HEK293T (cell line): ENCODE measurements at regions of chr1 and their contacts with region 1.

Region 1: GRCh38 chr1:151340870-151341754 is 5.9 kb downstream of the RFX5 start:
- DNase-seq: peak; percentile 77

Region 2: DNA sequence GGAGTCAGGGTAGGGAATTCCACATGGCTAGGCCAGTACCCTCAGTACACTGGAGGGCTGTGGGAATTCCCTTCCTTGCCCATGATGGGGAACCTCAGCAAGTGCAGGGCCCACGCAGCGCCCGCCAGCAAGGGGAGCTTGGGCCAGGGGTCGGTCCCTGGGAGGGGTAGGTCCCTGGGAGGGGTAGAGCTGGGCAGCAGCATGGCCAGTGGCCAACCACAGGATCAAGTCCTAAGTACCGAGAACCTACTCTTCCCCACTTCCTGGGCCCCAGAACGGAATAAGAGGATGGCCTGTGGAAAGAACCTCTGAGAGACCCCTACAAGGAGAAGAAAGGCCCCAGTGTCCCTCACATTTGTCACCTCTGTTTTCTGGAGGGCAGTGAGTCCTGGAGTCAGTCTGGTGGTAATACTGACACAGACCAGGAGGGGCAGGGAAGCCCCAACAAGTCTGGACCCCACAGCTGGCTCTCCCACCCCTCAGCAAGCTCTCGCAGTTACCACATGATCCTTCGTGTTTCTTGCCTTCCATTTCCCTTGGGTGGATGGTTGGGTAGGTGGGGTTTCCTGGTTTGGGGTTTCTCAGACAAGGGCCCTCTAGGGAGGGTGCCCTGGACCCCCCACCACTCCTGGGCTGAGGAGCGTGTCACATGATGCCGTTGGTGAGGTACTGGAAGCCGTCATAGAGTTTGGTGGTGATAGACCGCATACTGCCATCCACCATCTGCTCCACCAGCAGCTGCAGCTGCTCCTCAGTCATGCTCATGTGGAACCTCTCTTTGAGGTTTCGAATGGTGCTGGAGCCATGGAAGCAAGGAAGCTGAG is 48.7 kb before region 1 on chr1:
- CTCF ChIA-PET with region 1: interaction called, 105 read pairs
- POLR2A ChIA-PET with region 1: interaction called, 4 read pairs
- DNase-seq: no peak

Region 3: DNA sequence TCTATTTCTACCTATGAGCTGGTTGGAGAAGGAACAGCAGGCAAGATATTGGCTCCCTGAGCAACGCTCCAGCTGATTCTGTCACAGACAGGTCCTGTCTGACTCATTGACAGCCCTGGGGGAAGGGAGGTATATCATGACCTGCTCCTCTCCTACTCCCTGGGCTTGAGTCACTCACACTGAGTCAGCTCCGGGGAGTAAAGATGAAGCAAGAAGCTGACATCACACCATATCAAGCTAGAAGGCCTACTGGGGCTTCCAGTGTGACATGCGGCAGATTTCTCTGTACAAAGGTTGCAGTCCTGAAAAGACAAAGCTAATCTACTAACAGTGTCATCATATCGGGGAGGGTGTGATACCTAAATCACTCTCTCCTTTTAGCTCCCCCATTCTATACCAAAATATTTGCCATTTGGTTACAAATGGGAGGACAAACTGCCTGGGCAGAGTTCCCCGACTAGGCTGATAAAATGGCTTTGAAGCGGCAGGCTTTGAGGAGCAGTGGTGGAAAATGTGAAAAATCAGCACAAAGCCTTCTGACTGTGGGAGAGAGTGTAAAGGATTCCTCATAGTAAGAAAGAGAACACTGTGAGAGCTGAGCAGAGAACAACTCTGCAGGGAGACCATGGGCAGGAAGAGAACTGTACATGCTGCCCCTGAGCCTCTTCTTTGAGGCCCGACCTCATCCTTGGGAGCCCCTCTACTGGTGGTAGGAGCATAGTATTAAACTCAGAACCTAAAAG is 29.4 kb before region 1 on chr1:
- CTCF ChIA-PET with region 1: interaction called, 19 read pairs
- POLR2A ChIA-PET with region 1: interaction called, 5 read pairs
- DNase-seq: peak; percentile 48

Region 4: GRCh38 chr1:151327223-151327902 is 13.7 kb before region 1 on chr1 and contains the start of gene PI4KB:
- CTCF ChIA-PET with region 1: interaction called, 24 read pairs
- POLR2A ChIA-PET with region 1: interaction called, 45 read pairs
- DNase-seq: peak; percentile 96

Region 5: GRCh38 chr1:151361913-151362815 is 21.1 kb after region 1 on chr1:
- CTCF ChIA-PET with region 1: no interaction called
- POLR2A ChIA-PET with region 1: no interaction called
- DNase-seq: no peak